T-cell (primary cell): ENCODE measurements at regions of chr12 and their contacts with region 1.

Region 1: DNA sequence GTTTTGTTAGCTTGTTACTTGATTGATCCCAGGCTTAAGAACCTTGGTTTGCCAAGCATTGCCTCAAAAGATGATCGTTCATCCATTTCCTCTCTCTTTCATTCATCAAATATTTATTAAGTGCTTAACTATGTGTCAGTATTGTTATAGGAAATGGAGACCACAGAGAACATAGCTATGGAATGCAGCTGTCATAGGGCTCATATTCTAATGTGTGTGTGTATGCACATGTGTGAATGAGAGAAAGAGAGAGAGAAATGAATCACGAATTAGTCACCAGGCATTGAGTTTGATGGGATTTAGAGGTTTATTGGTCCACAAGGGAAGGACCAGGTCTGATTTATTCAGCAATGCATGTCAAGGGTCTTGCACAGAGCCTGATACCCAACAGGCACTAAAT is 71.0 kb upstream of the FBXO21 start:
- DNase-seq: no peak
- ATAC-seq: no peak
- H3K4me3 ChIP-seq: no peak overlapping the region
- H3K4me3 Mint-ChIP-seq: no peak overlapping the region
- H3K27ac ChIP-seq: no peak overlapping the region
- H3K27ac Mint-ChIP-seq: no peak overlapping the region
- H3K4me1 ChIP-seq: no peaks in the 10 kb centered on the region
- H3K4me1 Mint-ChIP-seq: no peaks in the 10 kb centered on the region
- H3K27me3 ChIP-seq: peaks cover 0 to 7% of the 10 kb centered on the region in 2 experiments
- H3K27me3 Mint-ChIP-seq: peaks cover 10 to 15% of the 10 kb centered on the region in 2 donors

Region 2: GRCh38 chr12:117760990-117761389 is 499.7 kb after region 1 on chr12:
- CTCF ChIA-PET with region 1: no interaction called
- POLR2A ChIA-PET with region 1: interaction called in 1 of 2 experiments, 10 read pairs
- DNase-seq: no peak
- ATAC-seq: no peak
- H3K4me3 ChIP-seq: no peak overlapping the region
- H3K4me3 Mint-ChIP-seq: no peak overlapping the region
- H3K27ac ChIP-seq: no peak overlapping the region
- H3K27ac Mint-ChIP-seq: no peak overlapping the region
- H3K4me1 ChIP-seq: no peaks in the 10 kb centered on the region
- H3K4me1 Mint-ChIP-seq: no peaks in the 10 kb centered on the region
- H3K27me3 ChIP-seq: peaks cover 0 to 4% of the 10 kb centered on the region in 2 experiments
- H3K27me3 Mint-ChIP-seq: peaks cover 0 to under 1% of the 10 kb centered on the region in 2 donors

Region 3: DNA sequence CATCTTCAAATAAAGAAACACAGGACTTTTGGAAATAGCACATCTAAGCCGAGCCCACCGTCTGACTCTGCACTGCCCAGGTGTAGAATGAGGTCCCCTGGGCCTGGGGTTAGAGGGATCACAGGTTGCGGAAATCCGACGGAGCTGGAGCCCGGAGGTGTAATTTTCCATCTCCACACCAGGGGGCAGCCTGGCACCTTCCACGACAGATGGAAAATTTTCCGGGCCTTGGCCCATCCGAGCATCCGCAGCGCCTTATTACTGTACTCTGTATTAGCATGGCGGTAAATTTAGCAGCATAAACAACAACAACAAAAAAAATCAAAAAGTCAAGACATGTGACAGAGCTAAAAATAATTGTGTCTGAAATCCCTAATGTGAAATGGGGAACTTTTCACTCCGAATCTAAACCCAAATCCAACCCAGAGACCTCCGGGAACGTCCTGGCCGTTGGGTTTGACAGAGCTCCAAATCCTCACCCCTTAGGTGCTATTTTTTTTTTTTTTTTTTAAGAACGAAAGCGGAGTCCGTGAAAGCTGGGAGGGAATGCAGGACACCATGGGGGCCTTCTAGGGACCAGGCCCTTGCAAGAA is 613.7 kb after region 1 on chr12:
- CTCF ChIA-PET with region 1: interaction called in 1 of 2 experiments, 10 read pairs
- POLR2A ChIA-PET with region 1: no interaction called
- DNase-seq: peak in 33 of 35 experiments; percentile 12 to 71 (median 41)
- ATAC-seq: peak; percentile 41 to 58 (median 52)
- H3K4me3 ChIP-seq: no peak overlapping the region
- H3K4me3 Mint-ChIP-seq: no peak overlapping the region
- H3K27ac ChIP-seq: no peak overlapping the region
- H3K27ac Mint-ChIP-seq: no peak overlapping the region
- H3K4me1 ChIP-seq: peaks cover 0 to 11% of the 10 kb centered on the region in 2 experiments
- H3K4me1 Mint-ChIP-seq: peaks cover 0 to 13% (median 10%) of the 10 kb centered on the region in 3 donors
- H3K27me3 ChIP-seq: peaks cover 7 to 24% of the 10 kb centered on the region in 2 experiments
- H3K27me3 Mint-ChIP-seq: peaks cover 18 to 30% of the 10 kb centered on the region in 2 donors